ENCODE measurements at regions of chrX and their contacts with region 1.

Region 1: GRCh38 chrX:2342874-2343273 is 157.9 kb downstream of the DHRSX start:
- DNase-seq: no peak

Region 2: GRCh38 chrX:2325076-2325784 is 17.6 kb before region 1 on chrX:
- intact Hi-C with region 1: loop called (anchors 2 kb)
- DNase-seq: peak; percentile 86

Region 3: DNA sequence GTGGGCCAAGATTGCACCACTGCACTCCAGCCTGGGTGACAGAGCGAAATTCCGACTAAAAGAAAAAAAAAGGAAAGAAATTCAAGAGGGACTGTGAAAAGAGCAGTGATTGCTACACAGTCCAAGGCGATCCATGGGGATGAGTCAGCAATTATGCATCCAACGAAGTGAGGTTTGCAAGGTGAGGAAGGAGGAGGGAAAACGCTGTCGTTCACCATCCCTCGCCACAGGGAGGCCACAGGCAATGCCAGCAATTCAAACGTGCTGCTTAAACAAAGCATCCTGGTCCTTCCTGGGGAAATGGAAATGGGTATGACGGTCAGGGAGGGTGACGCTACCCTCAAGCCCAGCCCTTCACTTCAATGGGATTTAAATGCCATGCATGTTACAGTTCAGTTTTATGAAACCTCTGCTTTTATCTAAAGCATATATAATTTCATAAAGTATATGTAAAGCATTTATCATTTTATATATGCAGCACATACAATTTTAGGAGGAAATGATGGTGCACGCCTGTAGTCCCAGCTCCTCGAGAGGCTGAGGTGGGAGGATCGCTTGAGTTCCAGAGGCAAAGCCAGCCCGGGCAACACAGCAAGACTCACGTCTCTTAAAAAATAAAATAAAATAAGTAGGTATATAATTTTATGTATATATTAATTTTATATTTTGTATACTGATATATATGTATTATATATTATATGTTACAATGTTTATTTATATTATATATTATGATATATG is 49.2 kb after region 1 on chrX:
- intact Hi-C with region 1: no loop called
- DNase-seq: no peak

Region 4: GRCh38 chrX:2690856-2691542 is 348.1 kb after region 1 on chrX and contains the start of gene CD99:
- intact Hi-C with region 1: no loop called
- DNase-seq: peak; percentile 93
- total RNA-seq, gene CD99: 327 TPM

Measured in cardiac septum (tissue), 1 donor.